Activated naive CD4-positive, alpha-beta T cell treated with anti-CD3 and anti-CD28 coated beads, Interleukin-2, amount 10 ng/mL, durations not matched to agents 7 days and 5 days (primary cell): ENCODE measurements at regions of chr6 and their contacts with region 1.

Region 1: DNA sequence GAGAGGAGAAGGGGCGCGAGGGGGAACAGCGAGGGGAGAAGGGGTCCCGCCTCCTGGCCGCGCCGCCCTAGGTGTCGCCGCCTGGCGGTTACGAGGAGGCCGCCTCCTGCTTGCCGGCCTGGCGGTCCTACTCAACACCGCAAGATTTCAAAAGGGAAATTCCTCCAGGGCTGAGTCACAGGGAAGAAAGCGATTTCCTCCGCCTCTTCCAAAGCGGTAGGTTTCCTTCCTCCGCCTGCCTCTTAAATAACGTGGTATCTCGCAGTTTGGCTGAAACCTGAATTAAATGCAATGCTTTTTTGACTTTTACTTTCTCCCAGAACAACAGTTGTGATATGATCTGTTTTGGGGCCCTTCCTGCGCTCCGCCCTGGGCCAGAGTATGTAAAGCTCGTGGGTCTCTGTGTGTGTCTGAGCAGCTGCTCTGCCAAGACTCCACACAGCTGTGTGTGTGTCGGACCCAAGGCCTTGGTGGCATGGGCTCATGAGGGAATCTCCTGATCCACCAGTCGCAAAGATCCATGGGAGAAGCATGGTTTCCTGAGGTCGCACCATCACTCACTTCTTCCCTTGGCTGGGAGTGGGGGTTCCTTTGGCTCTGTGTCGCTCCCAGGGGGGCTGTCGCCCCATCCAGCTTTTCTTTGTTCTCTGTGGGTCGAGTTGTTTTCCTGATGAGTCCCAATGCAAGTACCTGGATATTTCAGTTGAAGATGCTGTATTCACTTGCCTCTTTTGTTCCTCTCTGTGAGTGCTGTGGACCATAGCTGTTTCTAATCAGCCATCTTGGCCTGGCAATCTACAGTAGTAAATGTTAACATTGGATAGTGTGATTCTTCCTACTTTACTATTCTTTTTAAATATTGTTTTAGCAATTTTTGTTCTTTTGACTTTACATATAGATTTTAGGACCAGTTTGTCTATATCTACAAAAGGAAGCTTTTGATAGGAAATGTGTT is 31.6 kb upstream of the NOTCH4 start:
- DNase-seq: peak; percentile 52
- H3K4me3 Mint-ChIP-seq: no peak overlapping the region
- H3K27ac Mint-ChIP-seq: no peak overlapping the region
- H3K4me1 Mint-ChIP-seq: peaks cover 26% of the 10 kb centered on the region
- H3K27me3 Mint-ChIP-seq: peaks cover 23% of the 10 kb centered on the region

Region 2: GRCh38 chr6:32244946-32245398 is 10.5 kb before region 1 on chr6:
- CTCF ChIA-PET with region 1: interaction called, 20 read pairs
- DNase-seq: peak; percentile 81
- H3K4me3 Mint-ChIP-seq: peak overlapping the region; percentile 19
- H3K27ac Mint-ChIP-seq: no peak overlapping the region
- H3K4me1 Mint-ChIP-seq: peaks cover 27% of the 10 kb centered on the region
- H3K27me3 Mint-ChIP-seq: peaks cover 27% of the 10 kb centered on the region

Region 3: GRCh38 chr6:32271429-32271828 is 16.0 kb after region 1 on chr6:
- CTCF ChIA-PET with region 1: interaction called, 10 read pairs
- DNase-seq: no peak
- H3K4me3 Mint-ChIP-seq: peak overlapping the region; percentile 4
- H3K27ac Mint-ChIP-seq: peak overlapping the region; percentile 74
- H3K4me1 Mint-ChIP-seq: peaks cover 30% of the 10 kb centered on the region
- H3K27me3 Mint-ChIP-seq: peaks cover 23% of the 10 kb centered on the region